ENCODE measurements at regions of chr9 and their contacts with region 1.

Region 1: DNA sequence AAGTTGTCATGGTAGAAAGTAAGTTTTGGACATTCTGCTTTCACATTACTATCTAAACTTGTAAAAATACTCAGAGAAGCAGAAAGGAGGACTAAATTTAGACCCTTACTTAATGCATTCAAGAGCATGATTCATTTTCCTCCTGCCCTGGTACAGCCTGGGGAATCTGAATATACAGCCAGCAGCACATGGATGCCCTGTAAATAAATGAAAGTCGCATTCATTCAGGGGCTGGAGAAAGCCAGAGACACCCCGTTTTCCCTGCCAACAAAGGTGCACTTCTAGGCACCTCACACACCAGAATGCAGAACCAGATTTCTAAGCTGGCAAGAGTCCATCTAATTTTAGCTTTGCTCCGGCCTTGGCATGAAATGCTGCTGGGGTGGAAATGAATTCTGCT is 172.7 kb upstream of the KLF9 start:
- DNase-seq: no peak
- H3K4me3 ChIP-seq: no peak overlapping the region
- H3K27ac ChIP-seq: peak overlapping the region; percentile 81 to 89 (median 84)
- H3K4me1 ChIP-seq: peaks cover 48 to 63% (median 59%) of the 10 kb centered on the region in 4 donors
- H3K27me3 ChIP-seq: no peaks in the 10 kb centered on the region
- CTCF ChIP-seq: no peak
- EP300 ChIP-seq: no peak
- POLR2A ChIP-seq: no peak

Region 2: DNA sequence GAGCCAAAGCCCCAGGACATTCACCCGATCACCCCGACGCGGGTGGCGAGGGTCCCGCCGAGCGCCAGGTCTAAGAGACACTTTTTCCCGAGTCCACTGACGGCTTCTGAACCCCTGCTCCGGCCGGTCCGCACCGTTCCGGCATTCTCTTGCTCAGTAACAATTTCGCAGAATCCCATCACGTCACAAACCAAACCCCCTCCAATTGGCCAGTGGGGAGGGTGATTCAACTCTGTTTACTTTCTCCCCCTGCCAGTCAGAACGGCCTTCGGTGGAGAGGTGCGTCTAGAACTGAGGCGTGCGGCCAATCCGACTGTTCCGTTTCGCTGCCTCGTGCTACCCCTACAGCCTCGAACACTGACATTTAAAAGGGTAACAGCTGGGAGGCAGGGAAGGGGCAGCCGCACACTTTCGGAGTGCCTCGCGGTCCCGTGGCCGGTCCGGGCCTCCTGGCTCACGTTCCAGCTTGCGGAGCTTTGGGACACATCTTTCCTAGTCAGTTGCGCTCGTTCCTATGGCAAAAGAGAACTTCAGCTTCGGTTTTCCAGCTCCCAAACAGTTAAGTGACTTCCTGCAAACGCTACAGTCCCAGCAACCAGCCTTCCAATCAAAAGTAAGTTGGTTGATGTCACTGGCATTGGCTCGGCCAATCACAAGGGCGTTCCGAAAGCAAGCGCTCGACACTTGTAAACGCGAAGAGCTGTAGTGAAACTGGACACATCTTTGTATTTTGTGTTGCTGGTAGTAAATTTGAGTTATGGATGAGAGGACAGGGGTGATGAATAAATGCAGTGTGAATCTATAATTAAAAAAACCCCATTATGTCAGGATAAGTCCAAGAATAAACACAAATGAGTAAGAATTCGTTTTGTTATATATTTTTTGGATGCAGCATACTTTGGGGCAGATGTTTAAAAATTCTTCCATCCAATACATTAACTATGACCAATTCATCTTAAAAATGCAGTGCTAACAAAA is 173.1 kb before region 1 on chr9 and contains the start of gene KLF9:
- intact Hi-C with region 1: loop called (anchors 2 kb)
- DNase-seq: peak; percentile 99
- H3K4me3 ChIP-seq: peak within 1 kb of the TSS; percentile 66 to 99 (median 89)
- H3K27ac ChIP-seq: peak within 1 kb of the TSS; percentile 91 to 100 (median 100)
- H3K4me1 ChIP-seq: peaks cover 44 to 55% (median 47%) of the 10 kb centered on the region in 4 donors
- H3K27me3 ChIP-seq: no peaks in the 10 kb centered on the region
- CTCF ChIP-seq: peak in 1 of 3 experiments; percentile 3
- EP300 ChIP-seq: no peak
- POLR2A ChIP-seq: peak; percentile 90
- total RNA-seq, gene KLF9: 143 to 209 (median 184) TPM

Region 3: GRCh38 chr9:70494221-70494620 is 93.0 kb before region 1 on chr9:
- intact Hi-C with region 1: loop called (anchors 5 kb)
- DNase-seq: no peak
- H3K4me3 ChIP-seq: no peak overlapping the region
- H3K27ac ChIP-seq: peak overlapping the region in 3 of 4 donors; percentile 51 to 57 (median 53)
- H3K4me1 ChIP-seq: peaks cover 34 to 56% (median 48%) of the 10 kb centered on the region in 4 donors
- H3K27me3 ChIP-seq: no peaks in the 10 kb centered on the region
- CTCF ChIP-seq: no peak
- EP300 ChIP-seq: no peak
- POLR2A ChIP-seq: no peak

Region 4: GRCh38 chr9:70835323-70835722 is 248.1 kb after region 1 on chr9:
- intact Hi-C with region 1: no loop called
- DNase-seq: no peak
- H3K4me3 ChIP-seq: no peak overlapping the region
- H3K27ac ChIP-seq: no peak overlapping the region
- H3K4me1 ChIP-seq: no peaks in the 10 kb centered on the region
- H3K27me3 ChIP-seq: no peaks in the 10 kb centered on the region
- CTCF ChIP-seq: no peak
- EP300 ChIP-seq: no peak
- POLR2A ChIP-seq: no peak

Measured in esophagus muscularis mucosa (tissue), 4 donors.